Mammary epithelial cell (primary cell): ENCODE measurements at regions of chr4 and their contacts with region 1.

Region 1: GRCh38 chr4:38034986-38035882 is 75.0 kb downstream of the PTTG2 start:
- DNase-seq: peak; percentile 30
- H3K4me3 ChIP-seq: no peak overlapping the region
- H3K27ac ChIP-seq: no peak overlapping the region
- H3K4me1 ChIP-seq: no peaks in the 10 kb centered on the region
- H3K27me3 ChIP-seq: no peaks in the 10 kb centered on the region
- CTCF ChIP-seq: peak; percentile 59 to 63

Region 2: DNA sequence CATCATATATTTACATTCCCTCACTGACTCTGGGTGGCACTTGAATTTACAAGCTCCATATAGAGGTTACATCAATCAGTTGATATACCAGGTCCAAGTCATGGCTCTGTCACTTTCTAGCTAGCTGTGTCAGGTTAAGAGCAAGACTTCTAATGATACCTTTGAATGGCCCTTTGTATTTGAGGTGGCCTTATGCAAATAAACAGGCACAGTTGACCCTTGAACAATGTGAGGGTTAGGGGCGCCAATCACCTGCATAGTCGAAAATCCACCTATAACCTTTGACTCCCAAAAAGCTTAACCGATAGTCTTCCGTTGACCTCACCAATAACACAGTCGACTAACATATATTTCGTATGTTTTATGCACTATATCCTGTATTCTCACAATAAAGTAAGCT is 76.3 kb before region 1 on chr4:
- CTCF ChIA-PET with region 1: no interaction called
- dilution Hi-C with region 1: no loop called
- in situ Hi-C with region 1: no loop called
- intact Hi-C with region 1: no loop called
- DNase-seq: no peak
- H3K4me3 ChIP-seq: no peak overlapping the region
- H3K27ac ChIP-seq: no peak overlapping the region
- H3K4me1 ChIP-seq: no peaks in the 10 kb centered on the region
- H3K27me3 ChIP-seq: no peaks in the 10 kb centered on the region
- CTCF ChIP-seq: no peak

Region 3: GRCh38 chr4:37970487-37971101 is 64.6 kb before region 1 on chr4:
- CTCF ChIA-PET with region 1: no interaction called
- dilution Hi-C with region 1: no loop called
- in situ Hi-C with region 1: no loop called
- intact Hi-C with region 1: loop called (anchors 2 kb)
- DNase-seq: peak; percentile 68
- H3K4me3 ChIP-seq: no peak overlapping the region
- H3K27ac ChIP-seq: no peak overlapping the region
- H3K4me1 ChIP-seq: no peaks in the 10 kb centered on the region
- H3K27me3 ChIP-seq: no peaks in the 10 kb centered on the region
- CTCF ChIP-seq: peak; percentile 64 to 77